Left ventricle myocardium inferior (tissue), 1 donor: ENCODE measurements at regions of chr5 and their contacts with region 1.

Region 1: GRCh38 chr5:58460732-58461286 is 923 bp upstream of the PLK2 start:
- DNase-seq: peak; percentile 92
- H3K4me3 ChIP-seq: peak overlapping the region; percentile 90
- H3K27ac ChIP-seq: peak overlapping the region; percentile 96
- H3K4me1 ChIP-seq: peaks cover 57% of the 10 kb centered on the region
- H3K27me3 ChIP-seq: no peaks in the 10 kb centered on the region
- CTCF ChIP-seq: peak; percentile 76

Region 2: DNA sequence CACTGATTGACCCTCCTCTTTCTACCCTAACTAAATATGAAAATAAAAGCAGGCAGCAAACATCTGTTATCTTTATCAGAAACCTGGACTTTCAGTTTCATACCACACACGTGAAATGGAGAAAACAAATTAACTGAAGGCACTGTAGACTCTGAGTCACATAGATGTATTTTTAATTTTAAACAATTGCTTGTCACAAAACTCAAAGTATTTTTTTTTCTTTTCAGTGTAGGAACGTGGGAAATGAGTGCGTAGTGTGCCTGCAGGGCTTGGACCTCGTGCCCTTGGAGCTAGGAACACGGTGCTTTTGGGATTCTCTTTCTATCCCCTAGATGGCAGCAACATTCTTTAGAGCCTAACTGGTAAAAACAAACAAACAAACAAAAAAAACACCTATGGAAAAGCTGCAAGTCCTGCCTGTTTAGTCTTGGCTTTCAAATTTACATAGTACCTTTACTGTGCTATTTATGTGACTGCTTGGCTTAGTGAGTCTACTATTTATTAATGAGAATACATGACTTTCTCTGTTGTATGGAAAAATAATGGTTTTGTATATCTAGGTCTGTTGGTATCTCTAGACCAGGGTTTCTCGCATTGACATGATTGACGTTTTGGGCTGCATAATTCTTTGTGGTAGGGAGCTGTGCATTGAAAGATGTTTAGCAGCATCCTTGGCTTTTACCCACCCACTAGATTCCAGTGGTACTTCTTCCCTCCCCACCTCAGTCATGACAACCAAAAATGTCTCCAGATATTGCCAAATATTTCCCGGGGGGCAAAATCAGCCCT is 961.4 kb before region 1 on chr5:
- intact Hi-C with region 1: loop called (anchors 2 kb)
- DNase-seq: no peak
- H3K4me3 ChIP-seq: peak overlapping the region; percentile 48
- H3K27ac ChIP-seq: peak overlapping the region; percentile 30
- H3K4me1 ChIP-seq: peaks cover 44% of the 10 kb centered on the region
- H3K27me3 ChIP-seq: no peaks in the 10 kb centered on the region
- CTCF ChIP-seq: peak; percentile 82

Region 3: DNA sequence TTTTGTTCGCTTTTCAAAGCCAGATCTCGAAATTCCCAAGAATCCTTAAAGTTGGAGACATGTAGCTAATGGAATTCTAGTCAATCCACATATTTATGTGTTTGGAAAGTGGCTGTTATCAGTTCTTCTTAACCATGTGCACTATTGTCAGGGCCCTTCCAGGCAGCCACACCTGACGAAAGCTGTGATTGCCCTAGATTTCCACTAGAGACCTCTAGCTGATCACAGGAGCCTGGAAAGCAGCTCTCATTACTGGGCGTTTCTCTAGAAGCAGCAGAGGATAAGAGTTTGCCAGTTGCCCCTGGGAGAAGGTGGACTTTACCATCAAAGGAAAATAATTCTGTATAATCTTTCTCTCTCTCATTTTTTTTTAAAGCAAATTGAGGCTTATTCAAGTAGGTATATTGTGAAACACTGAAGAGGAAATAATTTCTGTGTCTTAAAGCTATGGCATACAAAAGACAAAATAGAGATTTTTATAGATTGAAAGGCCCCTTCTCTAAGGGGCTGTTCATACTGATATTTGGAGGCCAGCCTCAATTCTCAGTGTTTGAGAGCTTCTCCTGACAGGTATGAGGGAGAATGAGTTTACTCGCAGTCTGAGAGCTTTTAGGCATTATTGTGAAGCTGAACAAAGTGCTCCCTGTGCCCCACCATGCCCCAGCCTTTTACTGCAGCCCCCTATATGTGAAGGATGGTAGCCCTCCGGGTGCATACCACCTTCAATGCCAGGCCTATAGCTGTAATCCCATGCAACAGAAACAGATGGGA is 572.8 kb before region 1 on chr5:
- intact Hi-C with region 1: loop called (anchors 2 kb)
- DNase-seq: no peak
- H3K4me3 ChIP-seq: no peak overlapping the region
- H3K27ac ChIP-seq: no peak overlapping the region
- H3K4me1 ChIP-seq: peaks cover 22% of the 10 kb centered on the region
- H3K27me3 ChIP-seq: no peaks in the 10 kb centered on the region
- CTCF ChIP-seq: peak; percentile 80

Region 4: GRCh38 chr5:58240286-58240685 is 220.5 kb before region 1 on chr5:
- intact Hi-C with region 1: loop called (anchors 10 kb)
- DNase-seq: no peak
- H3K4me3 ChIP-seq: no peak overlapping the region
- H3K27ac ChIP-seq: peak overlapping the region; percentile 84
- H3K4me1 ChIP-seq: peaks cover 31% of the 10 kb centered on the region
- H3K27me3 ChIP-seq: no peaks in the 10 kb centered on the region
- CTCF ChIP-seq: no peak

Region 5: DNA sequence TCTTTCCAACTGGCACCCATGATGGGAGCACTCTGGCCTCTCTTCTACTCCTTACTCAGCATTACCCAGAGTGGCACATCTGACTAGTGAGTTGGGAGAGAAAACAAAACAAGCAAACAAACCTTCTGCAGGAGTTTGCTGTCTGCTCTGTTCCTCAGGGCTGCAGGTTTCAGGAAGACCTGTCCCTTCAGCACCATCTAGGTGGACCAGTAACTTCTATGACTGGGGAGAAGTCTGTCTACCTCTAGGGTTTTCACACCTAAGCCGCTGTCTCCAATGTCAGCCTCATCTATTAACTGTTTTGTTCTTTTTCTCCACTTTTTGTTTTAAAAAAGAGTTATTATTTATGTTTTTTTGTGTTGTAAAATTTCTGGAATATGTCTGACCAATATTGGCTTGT is 180.7 kb after region 1 on chr5:
- intact Hi-C with region 1: no loop called
- DNase-seq: no peak
- H3K4me3 ChIP-seq: no peak overlapping the region
- H3K27ac ChIP-seq: no peak overlapping the region
- H3K4me1 ChIP-seq: no peaks in the 10 kb centered on the region
- H3K27me3 ChIP-seq: no peaks in the 10 kb centered on the region
- CTCF ChIP-seq: no peak